HCT116 (cell line): ENCODE measurements at regions of chr5 and their contacts with region 1.

Region 1: GRCh38 chr5:35442885-35443639 is 174.6 kb upstream of the SPEF2 start:
- DNase-seq: no peak
- ATAC-seq: no peak
- H3K4me3 ChIP-seq: no peak overlapping the region
- H3K27ac ChIP-seq: no peak overlapping the region
- H3K4me1 ChIP-seq: no peaks in the 10 kb centered on the region
- H3K27me3 ChIP-seq: peaks cover 6% of the 10 kb centered on the region; the same call in 1 of the 2 replicates
- CTCF ChIP-seq: no peak
- POLR2A ChIP-seq: no peak
- RAD21 ChIP-seq: no peak

Region 2: GRCh38 chr5:34717426-34718327 is 725.4 kb before region 1 on chr5:
- CTCF ChIA-PET with region 1: no interaction called
- POLR2A ChIA-PET with region 1: no interaction called
- RAD21 ChIA-PET with region 1: no interaction called
- intact Hi-C with region 1: no loop called
- DNase-seq: no peak
- ATAC-seq: no peak
- H3K4me3 ChIP-seq: no peak overlapping the region
- H3K27ac ChIP-seq: no peak overlapping the region
- H3K4me1 ChIP-seq: peaks cover 0 to 6% of the 10 kb centered on the region in 2 experiments; a peak in 1 of 4 replicates
- H3K27me3 ChIP-seq: no peaks in the 10 kb centered on the region
- CTCF ChIP-seq: no peak
- POLR2A ChIP-seq: no peak
- RAD21 ChIP-seq: no peak

Region 3: GRCh38 chr5:35404705-35405104 is 38.4 kb before region 1 on chr5:
- CTCF ChIA-PET with region 1: no interaction called
- POLR2A ChIA-PET with region 1: no interaction called
- RAD21 ChIA-PET with region 1: no interaction called
- intact Hi-C with region 1: loop called (anchors 1 kb)
- DNase-seq: no peak
- ATAC-seq: no peak
- H3K4me3 ChIP-seq: no peak overlapping the region
- H3K27ac ChIP-seq: no peak overlapping the region
- H3K4me1 ChIP-seq: no peaks in the 10 kb centered on the region
- H3K27me3 ChIP-seq: no peaks in the 10 kb centered on the region
- CTCF ChIP-seq: no peak
- POLR2A ChIP-seq: no peak
- RAD21 ChIP-seq: no peak